SK-N-SH (cell line): ENCODE measurements at regions of chr1 and their contacts with region 1.

Region 1: DNA sequence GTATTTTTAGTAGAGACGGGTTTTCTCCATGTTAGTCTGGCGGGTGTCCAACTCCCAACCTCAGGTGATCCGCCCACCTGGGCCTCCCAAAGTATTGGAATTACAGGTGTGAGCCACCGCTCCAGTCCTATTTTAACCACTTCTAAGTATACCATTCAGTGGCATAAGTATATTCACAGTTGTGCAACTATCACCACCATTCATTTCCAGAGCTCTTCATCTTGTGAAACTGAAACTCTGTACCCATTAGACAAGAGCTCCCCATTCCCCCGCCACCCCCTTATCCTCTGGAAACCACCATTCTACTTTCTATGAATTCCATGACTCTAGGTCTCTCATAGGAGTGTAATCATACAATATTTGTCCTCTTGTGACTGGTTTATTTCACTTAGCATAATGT is 40.2 kb upstream of the CAMTA1 start:
- DNase-seq: no peak
- H3K4me3 ChIP-seq: no peak overlapping the region
- H3K27ac ChIP-seq: no peak overlapping the region
- H3K4me1 ChIP-seq: peaks cover 0 to 9% of the 10 kb centered on the region in 2 experiments; a peak in 1 of 4 replicates
- H3K27me3 ChIP-seq: no peaks in the 10 kb centered on the region
- CTCF ChIP-seq: no peak
- EP300 ChIP-seq: no peak
- RAD21 ChIP-seq: no peak

Region 2: GRCh38 chr1:6727535-6727934 is 17.5 kb before region 1 on chr1:
- CTCF ChIA-PET with region 1: interaction called, 10 read pairs
- POLR2A ChIA-PET with region 1: no interaction called
- DNase-seq: peak; percentile 73
- H3K4me3 ChIP-seq: peak overlapping the region in 1 of 2 experiments; percentile 46; a peak in 1 of 4 replicates
- H3K27ac ChIP-seq: no peak overlapping the region
- H3K4me1 ChIP-seq: peaks cover 0 to 4% of the 10 kb centered on the region in 2 experiments; a peak in 1 of 4 replicates
- H3K27me3 ChIP-seq: no peaks in the 10 kb centered on the region
- CTCF ChIP-seq: peak; percentile 94
- EP300 ChIP-seq: no peak
- RAD21 ChIP-seq: peak; percentile 70